ENCODE measurements at regions of chr10 and their contacts with region 1.

Region 1: DNA sequence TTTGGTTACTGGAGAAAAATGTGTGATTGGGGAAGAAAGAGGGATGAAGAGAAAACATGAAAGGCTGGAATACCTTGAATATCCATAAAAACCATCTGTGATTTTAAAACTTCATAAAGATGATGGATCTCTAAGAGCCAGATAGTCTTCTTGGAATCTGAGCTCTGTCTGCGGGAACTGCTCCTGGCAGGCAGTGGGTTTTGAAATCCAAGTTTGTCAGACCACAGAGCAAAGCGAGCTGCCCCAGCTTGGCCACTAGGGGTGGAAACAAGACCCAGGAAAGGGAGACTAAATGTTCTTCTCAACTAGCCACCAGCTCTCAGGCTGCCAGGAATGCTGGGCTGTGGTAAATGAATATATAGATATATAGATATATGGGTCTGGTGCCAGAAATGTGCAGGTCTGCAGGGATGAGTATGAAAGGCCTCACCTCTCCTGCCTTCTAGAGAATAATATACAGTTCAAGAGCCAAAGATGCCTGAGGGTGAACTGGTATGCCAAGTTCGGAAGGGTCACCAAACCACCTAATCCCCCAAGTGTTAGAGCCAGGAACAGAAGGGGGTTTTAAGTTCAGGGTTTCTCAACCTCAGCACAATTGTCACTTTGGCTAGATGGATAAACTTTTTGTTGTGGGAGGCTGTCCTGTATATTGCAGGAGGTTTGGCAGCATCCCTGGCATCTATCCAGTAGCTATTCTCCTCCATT is 208.8 kb downstream of the KCNMA1 start:
- DNase-seq: peak; percentile 60
- H3K4me3 ChIP-seq: no peak overlapping the region
- H3K27ac ChIP-seq: no peak overlapping the region
- H3K27me3 ChIP-seq: no peaks in the 10 kb centered on the region
- CTCF ChIP-seq: peak; percentile 92

Region 2: DNA sequence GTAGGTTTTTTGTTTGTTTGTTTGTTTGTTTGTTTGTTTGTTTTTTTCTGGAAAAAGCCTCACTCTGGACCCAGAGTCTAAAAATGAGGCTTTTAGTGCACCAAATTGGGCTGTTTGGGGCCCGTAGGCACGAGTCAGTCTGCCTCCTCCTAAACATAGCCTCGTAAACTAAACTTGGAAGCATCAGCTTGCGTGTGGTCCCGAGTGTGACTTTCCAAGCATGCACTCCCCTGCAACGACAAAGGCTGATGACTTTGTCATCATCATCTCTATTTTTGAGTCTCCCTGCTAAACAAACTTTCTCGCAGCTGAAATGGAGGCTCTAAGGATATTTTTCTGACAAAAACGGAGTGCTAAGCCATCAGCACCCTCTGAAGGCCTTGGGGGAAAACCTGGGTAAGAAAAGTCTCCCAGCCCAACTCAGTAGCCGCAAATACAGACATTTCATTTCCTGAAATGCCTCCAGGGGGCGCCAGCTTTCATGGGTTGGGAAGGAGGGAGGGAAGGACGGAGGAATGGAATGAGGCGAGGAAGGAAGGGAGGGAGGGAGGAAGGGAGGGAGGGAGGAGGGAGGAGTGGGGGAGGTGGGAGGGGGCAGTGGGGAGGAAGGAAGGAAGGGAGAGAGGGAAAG is 37.1 kb before region 1 on chr10:
- CTCF ChIA-PET with region 1: interaction called, 13 read pairs
- POLR2A ChIA-PET with region 1: no interaction called
- DNase-seq: peak; percentile 73
- H3K4me3 ChIP-seq: no peak overlapping the region
- H3K27ac ChIP-seq: peak overlapping the region; percentile 78
- H3K27me3 ChIP-seq: no peaks in the 10 kb centered on the region
- CTCF ChIP-seq: peak; percentile 79

Region 3: DNA sequence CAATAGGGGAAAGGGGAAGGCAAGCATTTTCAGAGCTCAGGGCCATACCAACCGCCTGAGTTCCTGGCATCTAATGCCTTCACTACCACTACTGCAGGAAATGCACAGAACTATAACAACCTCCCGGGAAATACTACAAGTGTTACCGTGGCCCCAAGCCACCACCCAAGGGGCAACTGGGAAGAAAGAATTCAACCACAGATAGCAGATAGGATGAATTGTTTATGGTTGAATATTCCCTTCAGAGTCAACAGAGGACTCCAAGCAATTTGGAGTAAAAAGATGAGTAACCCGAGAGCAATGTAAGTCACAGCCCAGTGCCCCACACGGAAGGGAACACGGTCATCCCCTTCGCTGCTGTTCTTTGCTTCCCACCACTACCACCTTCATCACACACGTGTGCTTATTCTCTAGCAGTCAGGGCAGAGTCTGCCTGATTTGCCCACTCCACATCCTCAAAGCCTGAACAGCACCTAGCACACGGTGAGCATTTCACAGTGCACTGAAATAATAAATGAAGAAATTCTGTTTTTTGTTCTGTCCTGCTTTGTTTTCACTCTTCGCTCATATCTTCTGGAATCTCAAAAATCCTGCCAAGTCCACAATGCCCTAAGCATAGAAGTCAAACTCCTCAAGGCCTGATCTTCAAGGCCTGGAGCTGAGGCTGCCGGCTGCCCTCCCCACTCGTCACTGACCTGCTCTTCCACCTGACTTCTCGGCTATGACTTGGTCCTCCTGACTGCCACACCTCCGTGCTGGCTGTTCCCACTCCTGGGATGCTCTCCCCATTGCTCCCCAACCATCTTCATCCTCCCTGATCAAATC is 12.3 kb before region 1 on chr10:
- CTCF ChIA-PET with region 1: interaction called, 12 read pairs
- POLR2A ChIA-PET with region 1: no interaction called
- DNase-seq: peak; percentile 63
- H3K4me3 ChIP-seq: no peak overlapping the region
- H3K27ac ChIP-seq: peak overlapping the region; percentile 80
- H3K27me3 ChIP-seq: no peaks in the 10 kb centered on the region
- CTCF ChIP-seq: no peak

Region 4: DNA sequence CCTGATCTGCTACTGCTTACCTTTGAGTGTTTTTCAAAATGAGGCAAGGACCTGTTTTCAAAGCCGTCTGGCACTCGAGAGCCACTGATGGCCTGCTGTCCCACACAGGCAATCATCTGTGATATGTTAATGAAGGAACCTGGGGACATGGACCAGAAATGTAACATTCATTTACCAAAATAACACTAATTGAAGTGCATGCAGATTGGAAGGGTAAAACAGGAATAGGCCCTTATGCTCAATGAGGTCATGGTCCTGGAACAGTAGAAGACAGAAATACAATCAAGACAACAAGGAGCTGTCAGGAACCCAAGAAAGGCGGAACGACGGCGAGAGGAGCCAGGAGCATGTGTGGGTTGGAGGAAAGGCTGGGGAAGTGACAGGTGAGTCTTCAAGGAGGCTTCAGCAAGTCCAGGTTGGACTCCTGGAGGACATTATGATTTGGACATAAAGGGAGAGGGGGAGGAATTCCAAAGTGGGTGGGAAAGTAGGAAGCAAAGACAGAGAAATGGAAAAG is 572.2 kb after region 1 on chr10:
- CTCF ChIA-PET with region 1: no interaction called
- POLR2A ChIA-PET with region 1: no interaction called
- DNase-seq: no peak
- H3K4me3 ChIP-seq: no peak overlapping the region
- H3K27ac ChIP-seq: no peak overlapping the region
- H3K27me3 ChIP-seq: no peaks in the 10 kb centered on the region
- CTCF ChIP-seq: no peak

Measured in AG04450 (cell line).